HCT116 (cell line): ENCODE measurements at regions of chr1 and their contacts with region 1.

Region 1: GRCh38 chr1:231421993-231422764 is at the start of gene EGLN1:
- DNase-seq: peak; percentile 63
- ATAC-seq: peak; percentile 88
- H3K4me3 ChIP-seq: peak within 1 kb of the TSS; percentile 78 to 84
- H3K27ac ChIP-seq: peak within 1 kb of the TSS; percentile 90
- H3K4me1 ChIP-seq: peaks cover 18 to 43% of the 10 kb centered on the region in 2 experiments; a peak in 3 of 4 replicates
- H3K27me3 ChIP-seq: no peaks in the 10 kb centered on the region
- CTCF ChIP-seq: peak in 2 of 3 experiments; percentile 13 to 34; a peak in 1 of 6 replicates
- POLR2A ChIP-seq: peak; percentile 84
- RAD21 ChIP-seq: peak; percentile 63
- total RNA-seq, gene EGLN1: 27.1 TPM

Region 2: DNA sequence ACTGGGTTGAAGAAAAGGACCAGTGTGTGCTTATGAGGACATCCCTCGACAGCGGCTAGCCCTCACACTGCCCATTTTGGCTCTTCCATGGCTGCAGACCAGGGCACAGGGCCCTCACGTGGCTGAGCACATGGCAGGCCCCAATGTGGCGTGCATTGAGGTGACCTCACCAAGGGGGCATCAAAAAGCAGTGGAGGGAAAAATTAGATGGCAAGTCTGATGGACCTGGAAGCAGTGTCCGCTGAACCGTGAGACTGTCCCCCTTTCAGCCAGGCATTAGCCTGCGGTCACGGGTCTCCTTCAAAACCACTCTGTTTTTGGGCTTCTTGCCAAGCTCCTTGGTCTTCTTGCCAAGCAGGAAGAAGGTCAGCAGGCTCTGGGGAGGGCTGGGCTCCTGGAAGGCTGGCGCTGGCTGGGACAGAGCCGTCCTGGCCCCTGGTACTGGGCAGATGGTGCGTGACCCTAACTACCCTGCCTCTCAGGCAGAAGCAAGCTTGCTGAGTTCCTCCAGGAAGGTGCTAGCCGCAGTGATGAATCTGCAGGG is 229.5 kb before region 1 on chr1:
- CTCF ChIA-PET with region 1: no interaction called
- POLR2A ChIA-PET with region 1: no interaction called
- RAD21 ChIA-PET with region 1: no interaction called
- intact Hi-C with region 1: no loop called
- DNase-seq: no peak
- ATAC-seq: no peak
- H3K4me3 ChIP-seq: no peak overlapping the region
- H3K27ac ChIP-seq: no peak overlapping the region
- H3K4me1 ChIP-seq: 0 out of 4 replicates have a peak, but pooled peaks cover 1 to 4% of the 10 kb centered on the region in 2 experiments
- H3K27me3 ChIP-seq: no peaks in the 10 kb centered on the region
- CTCF ChIP-seq: no peak
- POLR2A ChIP-seq: no peak
- RAD21 ChIP-seq: no peak

Region 3: GRCh38 chr1:231357831-231358354 is 64.3 kb before region 1 on chr1:
- CTCF ChIA-PET with region 1: no interaction called
- POLR2A ChIA-PET with region 1: no interaction called
- RAD21 ChIA-PET with region 1: no interaction called
- intact Hi-C with region 1: loop called (anchors 2 kb)
- DNase-seq: peak; percentile 48
- ATAC-seq: peak; percentile 88
- H3K4me3 ChIP-seq: no peak overlapping the region
- H3K27ac ChIP-seq: peak overlapping the region; percentile 25; the same call in 1 of the 2 replicates
- H3K4me1 ChIP-seq: peaks cover 0 to 3% of the 10 kb centered on the region in 2 experiments; a peak in 1 of 4 replicates
- H3K27me3 ChIP-seq: no peaks in the 10 kb centered on the region
- CTCF ChIP-seq: peak; percentile 65 to 87 (median 85)
- POLR2A ChIP-seq: no peak
- RAD21 ChIP-seq: peak; percentile 93

Region 4: GRCh38 chr1:231395076-231395995 is 26.8 kb before region 1 on chr1:
- CTCF ChIA-PET with region 1: no interaction called
- POLR2A ChIA-PET with region 1: no interaction called
- RAD21 ChIA-PET with region 1: no interaction called
- intact Hi-C with region 1: loop called (anchors 1 kb)
- DNase-seq: peak; percentile 79
- ATAC-seq: peak; percentile 86
- H3K4me3 ChIP-seq: peak overlapping the region in 1 of 2 experiments; percentile 21; a peak in 2 of 4 replicates
- H3K27ac ChIP-seq: peak overlapping the region; percentile 55; the same call in 1 of the 2 replicates
- H3K4me1 ChIP-seq: peaks cover 28 to 70% of the 10 kb centered on the region in 2 experiments
- H3K27me3 ChIP-seq: no peaks in the 10 kb centered on the region
- CTCF ChIP-seq: no peak
- POLR2A ChIP-seq: no peak
- RAD21 ChIP-seq: no peak

Region 5: GRCh38 chr1:231528172-231529029 is 106.2 kb after region 1 on chr1 and contains the start of gene TSNAX:
- CTCF ChIA-PET with region 1: no interaction called
- POLR2A ChIA-PET with region 1: no interaction called
- RAD21 ChIA-PET with region 1: no interaction called
- intact Hi-C with region 1: loop called (anchors 1 kb)
- DNase-seq: peak; percentile 88
- ATAC-seq: peak; percentile 95
- H3K4me3 ChIP-seq: peak within 1 kb of the TSS; percentile 95 to 100
- H3K27ac ChIP-seq: peak within 1 kb of the TSS; percentile 78
- H3K4me1 ChIP-seq: peaks cover 7 to 22% of the 10 kb centered on the region in 2 experiments; a peak in 3 of 4 replicates
- H3K27me3 ChIP-seq: no peaks in the 10 kb centered on the region
- CTCF ChIP-seq: no peak
- POLR2A ChIP-seq: peak; percentile 84
- RAD21 ChIP-seq: no peak
- total RNA-seq, gene TSNAX: 47.1 TPM